ENCODE measurements at regions of chr10 and their contacts with region 1.

Region 1: GRCh38 chr10:58641095-58641531 is 128.4 kb downstream of the BICC1 start:
- DNase-seq: no peak
- H3K4me3 ChIP-seq: no peak overlapping the region
- H3K27ac ChIP-seq: no peak overlapping the region
- H3K4me1 ChIP-seq: no peaks in the 10 kb centered on the region
- H3K27me3 ChIP-seq: no peaks in the 10 kb centered on the region
- CTCF ChIP-seq: no peak; the same call in 1 of the 2 replicates

Region 2: DNA sequence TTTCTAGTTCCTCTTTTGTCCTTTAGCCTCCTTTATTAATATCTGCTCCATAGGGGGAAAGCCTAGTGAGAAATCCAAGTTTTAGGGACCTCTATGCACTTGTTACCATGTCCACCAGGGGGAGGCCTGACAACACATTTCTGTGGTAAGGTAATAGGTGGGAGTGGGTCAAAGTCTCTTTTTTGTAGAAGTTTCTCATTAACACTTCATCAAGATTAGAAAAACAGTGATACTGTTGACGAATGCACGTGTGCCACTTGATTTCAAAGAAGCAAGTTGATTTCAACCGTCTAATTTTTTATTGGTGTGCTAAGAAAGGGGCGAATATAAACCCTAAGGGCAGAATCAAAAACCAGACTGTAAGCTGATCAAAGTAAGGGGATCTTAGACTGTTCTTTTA is 341.5 kb before region 1 on chr10:
- CTCF ChIA-PET with region 1: no interaction called
- POLR2A ChIA-PET with region 1: no interaction called
- intact Hi-C with region 1: loop called (anchors 1 kb)
- DNase-seq: peak; percentile 48 to 54
- H3K4me3 ChIP-seq: no peak overlapping the region
- H3K27ac ChIP-seq: no peak overlapping the region
- H3K4me1 ChIP-seq: no peaks in the 10 kb centered on the region
- H3K27me3 ChIP-seq: no peaks in the 10 kb centered on the region
- CTCF ChIP-seq: peak; percentile 98

Region 3: GRCh38 chr10:58414270-58415041 is 226.7 kb before region 1 on chr10:
- CTCF ChIA-PET with region 1: no interaction called
- POLR2A ChIA-PET with region 1: no interaction called
- intact Hi-C with region 1: loop called (anchors 10 kb)
- DNase-seq: peak in 1 of 2 experiments; percentile 39
- H3K4me3 ChIP-seq: no peak overlapping the region
- H3K27ac ChIP-seq: no peak overlapping the region
- H3K4me1 ChIP-seq: no peaks in the 10 kb centered on the region
- H3K27me3 ChIP-seq: no peaks in the 10 kb centered on the region
- CTCF ChIP-seq: peak; percentile 68

Region 4: DNA sequence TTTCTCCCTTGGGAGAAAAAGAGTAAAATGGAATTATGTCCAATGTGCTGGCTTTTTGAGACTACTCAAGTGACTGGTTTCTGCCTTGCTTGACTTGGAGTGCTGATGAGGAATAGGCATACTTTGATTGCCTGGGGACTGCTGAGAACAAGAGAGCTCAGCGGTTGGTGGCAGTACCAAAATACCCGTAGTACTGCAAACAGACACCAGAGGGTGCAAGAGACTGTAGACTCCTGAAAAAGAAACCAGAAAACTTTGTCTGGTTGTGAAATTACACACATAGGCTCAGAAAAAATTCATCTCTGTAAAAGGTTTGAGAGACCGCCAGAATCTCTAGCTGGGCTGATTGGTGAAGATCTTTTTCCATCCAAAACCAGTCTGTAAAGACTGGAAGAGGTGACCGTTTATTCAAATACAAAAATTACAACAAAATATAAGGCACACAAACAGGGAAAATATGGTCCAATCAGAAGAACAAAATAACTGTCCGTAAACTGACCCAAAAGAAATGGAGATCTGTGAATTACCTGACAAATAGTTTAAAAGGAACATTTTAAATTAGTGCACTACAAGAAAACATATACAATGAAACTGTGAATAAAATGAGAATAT is 109.9 kb before region 1 on chr10:
- CTCF ChIA-PET with region 1: no interaction called
- POLR2A ChIA-PET with region 1: no interaction called
- intact Hi-C with region 1: loop called (anchors 1 kb)
- DNase-seq: peak; percentile 52 to 53
- H3K4me3 ChIP-seq: no peak overlapping the region
- H3K27ac ChIP-seq: no peak overlapping the region
- H3K4me1 ChIP-seq: no peaks in the 10 kb centered on the region
- H3K27me3 ChIP-seq: no peaks in the 10 kb centered on the region
- CTCF ChIP-seq: peak; percentile 88

Measured in PC-9 (cell line).